Activated CD8-positive, alpha-beta T cell treated with anti-CD3 and anti-CD28 coated beads for 36 hours (primary cell): ENCODE measurements at regions of chr11 and their contacts with region 1.

Region 1: DNA sequence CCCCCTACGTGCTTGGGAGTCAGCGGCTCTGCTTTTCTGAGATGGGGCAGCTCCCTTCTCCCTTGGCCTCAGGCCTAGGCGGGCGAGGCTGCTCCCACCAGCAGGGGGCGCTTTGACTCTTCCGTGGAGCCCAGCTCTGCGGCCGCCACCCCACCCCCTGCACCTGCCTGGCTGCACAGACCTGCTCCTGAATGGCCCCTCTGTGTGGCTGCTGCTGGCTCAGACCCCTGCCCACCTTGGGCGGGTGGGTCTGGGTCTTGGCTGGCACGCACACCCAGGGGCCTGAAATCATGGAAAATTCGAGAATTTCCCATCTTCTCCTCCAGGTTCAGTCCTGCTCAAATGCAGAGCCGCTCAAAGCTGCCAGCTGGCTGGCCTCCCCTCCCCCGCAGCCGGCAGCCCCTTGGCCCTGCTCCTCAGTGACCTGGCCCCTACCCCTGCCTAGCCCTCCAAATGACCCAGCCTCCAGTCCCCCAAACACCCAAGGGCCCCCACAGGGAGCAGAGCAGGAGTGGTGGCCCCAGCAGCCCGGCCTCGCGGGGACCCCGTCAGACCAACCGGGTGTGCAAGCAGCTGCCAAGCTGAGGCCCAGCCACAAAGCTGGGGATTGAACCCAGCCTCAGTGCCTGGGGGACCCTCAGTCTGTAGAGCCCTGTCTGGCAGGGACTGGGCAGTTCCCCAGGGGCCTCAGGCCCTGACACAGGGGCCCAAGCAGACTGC is 9.0 kb downstream of the PRR33 start:
- DNase-seq: peak; percentile 87
- ATAC-seq: peak; percentile 89
- H3K4me3 Mint-ChIP-seq: no peak overlapping the region
- H3K27ac Mint-ChIP-seq: no peak overlapping the region
- H3K4me1 Mint-ChIP-seq: peaks cover 5% of the 10 kb centered on the region
- H3K27me3 Mint-ChIP-seq: no peaks in the 10 kb centered on the region
- CTCF ChIP-seq: peak; percentile 78

Region 2: DNA sequence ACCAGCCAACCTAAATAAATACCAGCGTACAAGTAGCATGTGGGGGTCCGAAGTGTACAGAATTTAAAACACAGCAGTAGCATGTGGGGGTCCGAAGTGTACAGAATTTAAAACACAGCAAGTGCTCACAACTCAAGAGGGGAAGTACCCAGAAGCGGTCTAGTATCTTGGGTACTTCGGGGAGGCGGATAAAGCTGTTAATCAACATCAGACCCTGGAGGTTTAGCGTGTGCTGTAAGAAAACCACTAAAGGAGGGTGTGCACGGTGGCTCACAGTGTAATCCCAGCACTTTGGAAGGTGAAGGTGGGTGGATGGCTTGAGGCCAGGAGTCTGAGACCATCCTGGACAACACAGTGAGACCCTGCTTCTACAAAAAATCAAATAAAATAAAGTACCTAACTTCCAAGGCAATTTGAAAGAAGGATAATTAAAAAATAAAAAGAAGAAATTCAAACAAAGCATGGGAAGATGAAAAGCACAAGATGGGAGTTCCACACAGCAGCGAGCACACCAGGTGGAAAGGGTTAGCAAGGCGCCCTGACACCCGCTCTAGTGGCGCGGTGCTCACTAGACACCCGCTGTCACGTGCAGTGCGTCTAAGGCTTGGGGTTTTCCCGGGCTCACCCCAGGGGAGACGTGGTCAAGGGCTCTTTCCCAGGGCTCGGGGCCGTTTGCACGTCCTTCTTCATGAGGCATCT is 361.1 kb before region 1 on chr11:
- CTCF ChIA-PET with region 1: no interaction called
- POLR2A ChIA-PET with region 1: no interaction called
- intact Hi-C with region 1: no loop called
- DNase-seq: no peak
- ATAC-seq: no peak
- H3K4me3 Mint-ChIP-seq: no peak overlapping the region
- H3K27ac Mint-ChIP-seq: no peak overlapping the region
- H3K4me1 Mint-ChIP-seq: peaks cover 47% of the 10 kb centered on the region
- H3K27me3 Mint-ChIP-seq: no peaks in the 10 kb centered on the region
- CTCF ChIP-seq: no peak

Region 3: DNA sequence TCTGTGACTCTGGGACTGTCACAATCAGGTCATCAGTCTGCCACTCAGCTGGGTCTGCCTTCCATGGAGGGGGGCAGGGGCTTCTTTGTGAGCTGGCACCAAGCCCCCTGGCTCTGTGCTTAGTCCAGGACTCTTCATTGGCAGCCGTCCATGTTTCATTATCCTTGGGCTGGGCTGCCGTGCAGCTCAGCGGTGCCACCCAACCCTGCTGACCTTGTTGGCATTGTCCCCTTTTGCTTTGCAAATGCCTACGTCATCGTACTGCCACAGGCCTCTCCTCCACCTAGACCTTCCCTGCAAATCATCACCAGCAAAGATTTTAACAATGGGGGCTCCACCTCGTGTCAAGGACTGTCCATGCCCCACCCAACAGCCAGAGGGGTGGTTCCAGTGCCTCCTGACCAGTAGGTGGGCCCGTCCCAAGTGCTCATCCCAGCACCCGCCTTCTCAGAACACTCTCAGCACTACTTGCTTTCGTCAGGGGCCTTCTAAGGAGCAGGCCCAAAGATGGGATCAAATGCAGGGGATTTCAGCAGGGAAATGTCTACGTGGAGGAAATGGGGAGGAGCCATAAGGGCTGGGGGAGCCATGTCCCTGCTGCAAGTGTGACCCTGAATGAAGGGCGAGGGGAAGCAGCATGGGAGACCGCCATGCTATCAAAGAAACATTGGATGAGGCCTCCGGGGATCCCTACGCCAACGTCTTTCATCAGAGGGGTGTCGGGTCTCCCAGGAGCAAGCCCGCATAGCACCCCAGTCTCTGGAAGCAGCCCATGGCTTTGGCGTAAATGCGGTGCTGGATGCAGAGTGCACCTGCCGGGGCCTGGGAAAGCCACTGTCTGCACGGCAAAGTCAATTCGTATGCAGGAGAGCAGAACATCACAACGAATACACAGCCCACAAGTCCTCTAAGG is 167.4 kb before region 1 on chr11:
- CTCF ChIA-PET with region 1: no interaction called
- POLR2A ChIA-PET with region 1: no interaction called
- intact Hi-C with region 1: no loop called
- DNase-seq: no peak
- ATAC-seq: no peak
- H3K4me3 Mint-ChIP-seq: no peak overlapping the region
- H3K27ac Mint-ChIP-seq: no peak overlapping the region
- H3K4me1 Mint-ChIP-seq: no peaks in the 10 kb centered on the region
- H3K27me3 Mint-ChIP-seq: no peaks in the 10 kb centered on the region
- CTCF ChIP-seq: no peak

Region 4: DNA sequence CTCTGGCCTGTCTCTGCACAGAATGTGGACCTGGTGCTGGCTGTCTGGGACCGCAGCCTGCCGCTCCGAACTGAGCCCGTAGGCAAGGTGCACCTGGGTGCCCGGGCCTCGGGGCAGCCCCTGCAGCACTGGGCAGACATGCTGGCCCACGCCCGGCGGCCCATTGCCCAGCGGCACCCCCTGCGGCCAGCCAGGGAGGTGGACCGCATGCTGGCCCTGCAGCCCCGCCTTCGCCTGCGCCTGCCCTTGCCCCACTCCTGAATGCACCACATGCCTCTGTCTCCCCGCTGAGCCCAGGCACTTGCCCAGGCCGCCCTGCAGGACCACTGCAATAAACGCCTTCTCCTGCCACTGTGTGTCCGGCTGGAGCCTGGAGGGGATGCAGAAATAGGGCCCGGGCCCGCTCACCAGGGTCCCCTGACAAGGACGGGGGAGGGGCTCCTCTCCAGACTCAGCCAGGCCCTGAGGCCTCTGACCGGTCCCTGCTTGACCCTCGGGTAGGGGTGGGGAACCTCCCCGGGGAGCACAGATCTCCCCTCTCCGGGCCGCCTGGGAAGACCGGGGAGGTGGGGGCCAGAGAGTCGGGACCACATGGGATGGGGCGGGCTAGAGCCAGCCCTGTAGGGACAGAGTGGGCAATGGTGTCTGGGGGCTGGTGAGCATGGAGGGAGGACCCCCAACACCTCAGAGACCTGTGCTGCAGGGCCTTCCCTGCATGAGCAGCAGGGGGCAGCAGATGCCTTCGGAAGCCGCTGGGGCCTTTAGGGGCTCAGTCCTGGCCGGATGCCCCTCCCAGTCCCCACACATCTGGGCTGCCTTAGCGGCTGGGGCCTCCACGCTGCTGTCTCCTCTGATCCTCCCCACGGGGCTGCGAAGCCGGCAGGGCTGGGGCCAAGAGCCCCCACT is 45.3 kb before region 1 on chr11:
- CTCF ChIA-PET with region 1: interaction called, 25 read pairs
- POLR2A ChIA-PET with region 1: interaction called, 3 read pairs
- intact Hi-C with region 1: loop called (anchors 5 kb)
- DNase-seq: peak; percentile 91
- ATAC-seq: peak; percentile 97
- H3K4me3 Mint-ChIP-seq: no peak overlapping the region
- H3K27ac Mint-ChIP-seq: no peak overlapping the region
- H3K4me1 Mint-ChIP-seq: peaks cover 6% of the 10 kb centered on the region
- H3K27me3 Mint-ChIP-seq: no peaks in the 10 kb centered on the region
- CTCF ChIP-seq: peak; percentile 94

Region 5: GRCh38 chr11:1852877-1853276 is 29.8 kb before region 1 on chr11 and contains the start of gene LSP1:
- CTCF ChIA-PET with region 1: interaction called, 32 read pairs
- POLR2A ChIA-PET with region 1: interaction called, 81 read pairs
- intact Hi-C with region 1: no loop called
- DNase-seq: peak; percentile 95
- ATAC-seq: peak; percentile 65
- H3K4me3 Mint-ChIP-seq: peak within 1 kb of the TSS; percentile 86
- H3K27ac Mint-ChIP-seq: peak within 1 kb of the TSS; percentile 95
- H3K4me1 Mint-ChIP-seq: peaks cover 53% of the 10 kb centered on the region
- H3K27me3 Mint-ChIP-seq: no peaks in the 10 kb centered on the region
- CTCF ChIP-seq: no peak
- total RNA-seq, gene LSP1: 247 to 251 TPM

Region 6: GRCh38 chr11:1896923-1897322 is 14.2 kb after region 1 on chr11:
- CTCF ChIA-PET with region 1: interaction called, 17 read pairs
- POLR2A ChIA-PET with region 1: interaction called, 10 read pairs
- intact Hi-C with region 1: no loop called
- DNase-seq: no peak
- ATAC-seq: no peak
- H3K4me3 Mint-ChIP-seq: peak overlapping the region; percentile 36
- H3K27ac Mint-ChIP-seq: no peak overlapping the region
- H3K4me1 Mint-ChIP-seq: peaks cover 20% of the 10 kb centered on the region
- H3K27me3 Mint-ChIP-seq: peaks cover 15% of the 10 kb centered on the region
- CTCF ChIP-seq: no peak

Region 7: DNA sequence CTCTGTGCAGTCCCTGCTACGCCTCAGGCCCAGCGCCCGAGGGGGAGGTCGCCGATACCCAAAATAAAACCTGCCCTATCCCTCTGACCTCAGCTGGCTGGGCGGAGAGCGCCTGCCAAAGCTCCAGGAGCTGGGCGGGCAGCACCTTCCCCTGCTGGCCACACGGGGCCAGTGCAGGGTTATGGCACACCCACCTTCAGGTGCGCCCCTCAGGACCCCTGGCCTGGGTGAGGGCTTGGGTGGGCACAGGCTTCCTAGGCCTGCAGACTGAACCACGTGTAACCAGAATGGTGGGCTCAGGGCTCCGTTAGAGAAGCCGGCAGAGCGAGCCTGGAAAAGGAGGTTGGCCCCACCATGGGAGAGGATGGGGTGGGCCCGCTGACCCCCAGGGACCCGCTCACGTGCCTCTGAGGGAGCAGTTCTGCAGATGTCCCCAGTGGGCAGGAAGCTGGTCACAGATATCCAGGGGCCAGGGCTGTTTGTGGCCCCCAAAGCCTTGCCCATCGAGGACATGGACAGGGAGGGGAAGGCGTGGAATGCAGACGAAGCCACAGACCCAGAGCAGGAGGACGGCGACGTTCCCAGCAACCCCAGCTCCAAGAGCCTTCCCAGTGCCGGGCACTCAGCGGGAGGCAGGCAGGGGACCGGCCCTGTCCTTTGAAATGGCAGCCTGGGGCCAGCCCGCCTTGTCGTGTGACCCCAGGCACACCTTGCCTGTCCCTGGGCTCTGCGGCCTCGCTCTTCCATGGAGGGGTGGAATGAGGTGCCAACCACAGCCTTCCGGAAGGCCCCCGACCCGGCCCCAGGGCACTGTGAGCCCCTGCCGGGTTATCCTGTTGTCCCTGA is 35.2 kb after region 1 on chr11:
- CTCF ChIA-PET with region 1: interaction called, 11 read pairs
- POLR2A ChIA-PET with region 1: interaction called, 62 read pairs
- intact Hi-C with region 1: loop called (anchors 5 kb)
- DNase-seq: no peak
- ATAC-seq: peak; percentile 32
- H3K4me3 Mint-ChIP-seq: no peak overlapping the region
- H3K27ac Mint-ChIP-seq: no peak overlapping the region
- H3K4me1 Mint-ChIP-seq: peaks cover 19% of the 10 kb centered on the region
- H3K27me3 Mint-ChIP-seq: peaks cover 6% of the 10 kb centered on the region
- CTCF ChIP-seq: peak; percentile 59

Region 8: GRCh38 chr11:2002807-2003206 is 120.1 kb after region 1 on chr11:
- CTCF ChIA-PET with region 1: interaction called, 29 read pairs
- POLR2A ChIA-PET with region 1: no interaction called
- intact Hi-C with region 1: no loop called
- DNase-seq: no peak
- ATAC-seq: peak; percentile 76
- H3K4me3 Mint-ChIP-seq: no peak overlapping the region
- H3K27ac Mint-ChIP-seq: no peak overlapping the region
- H3K4me1 Mint-ChIP-seq: no peaks in the 10 kb centered on the region
- H3K27me3 Mint-ChIP-seq: no peaks in the 10 kb centered on the region
- CTCF ChIP-seq: no peak